Activated naive CD4-positive, alpha-beta T cell treated with anti-CD3 and anti-CD28 coated beads, Interleukin-2, amount 10 ng/mL, durations not matched to agents 7 days and 5 days (primary cell): ENCODE measurements at regions of chr11 and their contacts with region 1.

Region 1: GRCh38 chr11:44911029-44911814 is 39.5 kb downstream of the TP53I11 start:
- DNase-seq: peak; percentile 89
- H3K4me3 Mint-ChIP-seq: no peak overlapping the region
- H3K27ac Mint-ChIP-seq: no peak overlapping the region
- H3K4me1 Mint-ChIP-seq: peaks cover 3% of the 10 kb centered on the region
- H3K27me3 Mint-ChIP-seq: no peaks in the 10 kb centered on the region

Region 2: DNA sequence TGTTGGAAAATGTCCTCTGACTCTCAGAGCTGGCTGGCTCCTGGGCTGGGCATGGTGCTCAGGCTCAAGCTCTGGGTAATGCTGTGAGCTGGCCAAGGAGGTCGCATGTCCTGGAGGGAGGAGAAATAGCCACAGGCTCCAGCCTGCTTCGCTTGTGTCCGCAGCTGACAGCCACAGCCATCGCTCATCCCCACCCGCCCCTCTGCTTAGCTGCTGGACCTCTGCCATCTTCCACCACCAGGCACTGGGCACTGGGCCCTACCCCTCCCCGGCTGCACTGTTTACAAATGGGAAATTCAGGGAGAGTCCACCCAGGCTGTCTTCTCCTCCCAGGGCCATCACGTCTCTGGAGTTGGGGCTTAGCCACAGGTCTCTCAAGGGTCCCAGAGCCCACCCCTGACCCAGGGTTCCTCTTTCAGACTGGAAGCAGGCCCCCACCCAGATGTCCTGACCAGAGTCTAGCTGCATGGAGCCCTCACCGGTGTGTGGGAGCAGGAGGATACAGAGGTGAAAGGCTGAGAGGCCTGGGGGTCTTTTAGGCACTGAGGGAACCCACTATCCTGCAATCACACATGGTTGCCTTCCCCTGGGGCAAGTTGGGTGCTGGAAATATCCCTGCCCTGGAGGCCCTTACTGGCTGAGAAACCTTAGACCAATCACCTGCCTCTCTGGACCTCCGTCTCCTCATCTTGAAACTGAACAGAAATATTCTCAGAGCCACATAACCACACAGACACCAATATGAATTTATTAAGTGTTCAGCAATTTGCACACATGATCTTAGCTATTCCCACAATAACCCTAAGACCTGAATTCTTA is 283.1 kb before region 1 on chr11:
- CTCF ChIA-PET with region 1: interaction called, 13 read pairs
- DNase-seq: peak; percentile 11
- H3K4me3 Mint-ChIP-seq: no peak overlapping the region
- H3K27ac Mint-ChIP-seq: no peak overlapping the region
- H3K4me1 Mint-ChIP-seq: peaks cover 10% of the 10 kb centered on the region
- H3K27me3 Mint-ChIP-seq: peaks cover 41% of the 10 kb centered on the region

Region 3: DNA sequence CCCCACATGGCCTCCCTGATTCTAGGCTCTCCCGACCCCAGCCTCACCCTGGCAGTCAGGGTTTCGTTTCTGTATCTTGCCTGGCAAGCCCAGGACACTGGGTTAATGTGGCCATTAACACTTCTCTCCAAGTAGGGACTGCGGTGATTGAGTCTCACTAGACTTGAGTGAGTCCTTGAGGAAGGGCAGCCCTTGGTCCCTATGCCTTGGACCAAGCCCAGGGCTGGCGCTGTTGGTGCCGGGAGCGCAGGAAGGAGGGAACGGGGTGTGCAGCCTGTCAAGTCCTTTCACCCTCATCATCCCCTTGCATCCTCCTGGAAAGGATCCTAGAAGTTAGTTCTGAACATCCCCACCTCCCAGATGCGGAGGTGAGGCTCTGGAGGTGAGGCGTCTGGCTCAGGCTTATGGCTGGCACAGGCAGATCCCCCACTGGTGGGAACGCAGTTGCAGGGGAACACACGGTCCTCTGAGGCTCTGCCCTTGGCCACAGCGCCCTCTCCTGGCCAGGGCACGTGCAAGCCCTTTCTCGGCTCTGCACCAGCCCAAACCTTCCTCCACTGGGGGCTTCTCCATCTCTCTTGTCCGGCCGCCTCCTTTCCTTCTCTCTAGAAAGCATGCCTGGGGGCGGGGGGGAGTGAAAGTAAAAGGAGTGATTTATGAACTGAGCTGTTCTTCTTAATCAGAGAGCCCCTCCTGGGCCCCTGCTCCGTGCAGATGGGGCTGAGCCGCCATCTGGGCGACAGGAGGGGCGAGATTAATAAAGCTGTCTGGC is 17.2 kb before region 1 on chr11:
- CTCF ChIA-PET with region 1: interaction called, 13 read pairs
- DNase-seq: peak; percentile 67
- H3K4me3 Mint-ChIP-seq: no peak overlapping the region
- H3K27ac Mint-ChIP-seq: no peak overlapping the region
- H3K4me1 Mint-ChIP-seq: no peaks in the 10 kb centered on the region
- H3K27me3 Mint-ChIP-seq: peaks cover 4% of the 10 kb centered on the region

Region 4: DNA sequence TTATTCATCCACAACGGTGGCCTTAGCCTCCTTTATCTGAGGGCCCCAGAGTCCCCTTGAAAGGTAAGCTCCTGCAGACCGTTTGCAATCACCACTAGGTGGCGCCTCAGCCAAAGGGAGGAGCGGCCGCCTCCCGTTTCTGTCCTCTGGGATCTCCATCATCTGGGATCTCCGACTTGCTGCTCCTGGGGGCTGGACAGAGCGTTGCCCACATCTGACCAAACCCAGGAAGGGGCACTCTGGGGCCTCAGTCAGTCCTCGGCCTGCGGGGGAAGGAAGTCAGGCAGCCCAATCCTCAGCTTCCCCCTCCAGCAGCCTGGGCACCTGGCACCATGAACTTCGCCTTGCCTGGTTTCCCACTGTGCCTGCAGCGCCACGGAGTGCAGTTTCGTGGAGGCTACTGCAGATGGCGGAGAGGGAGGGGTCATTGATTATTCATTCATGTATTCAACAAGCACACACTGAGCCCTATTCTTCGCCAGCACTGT is 16.0 kb after region 1 on chr11:
- CTCF ChIA-PET with region 1: interaction called, 11 read pairs
- DNase-seq: peak; percentile 68
- H3K4me3 Mint-ChIP-seq: no peak overlapping the region
- H3K27ac Mint-ChIP-seq: no peak overlapping the region
- H3K4me1 Mint-ChIP-seq: no peaks in the 10 kb centered on the region
- H3K27me3 Mint-ChIP-seq: no peaks in the 10 kb centered on the region